Endothelial cell of umbilical vein (primary cell): ENCODE measurements at regions of chr11 and their contacts with region 1.

Region 1: GRCh38 chr11:116276051-116277044 is 496.4 kb downstream of the BUD13 start:
- DNase-seq: peak; percentile 50
- H3K4me3 ChIP-seq: no peak overlapping the region
- H3K27ac ChIP-seq: no peak overlapping the region
- H3K4me1 ChIP-seq: no peaks in the 10 kb centered on the region
- H3K27me3 ChIP-seq: peaks cover 0 to 3% of the 10 kb centered on the region in 2 experiments
- CTCF ChIP-seq: peak; percentile 84 to 95
- POLR2A ChIP-seq: no peak

Region 2: DNA sequence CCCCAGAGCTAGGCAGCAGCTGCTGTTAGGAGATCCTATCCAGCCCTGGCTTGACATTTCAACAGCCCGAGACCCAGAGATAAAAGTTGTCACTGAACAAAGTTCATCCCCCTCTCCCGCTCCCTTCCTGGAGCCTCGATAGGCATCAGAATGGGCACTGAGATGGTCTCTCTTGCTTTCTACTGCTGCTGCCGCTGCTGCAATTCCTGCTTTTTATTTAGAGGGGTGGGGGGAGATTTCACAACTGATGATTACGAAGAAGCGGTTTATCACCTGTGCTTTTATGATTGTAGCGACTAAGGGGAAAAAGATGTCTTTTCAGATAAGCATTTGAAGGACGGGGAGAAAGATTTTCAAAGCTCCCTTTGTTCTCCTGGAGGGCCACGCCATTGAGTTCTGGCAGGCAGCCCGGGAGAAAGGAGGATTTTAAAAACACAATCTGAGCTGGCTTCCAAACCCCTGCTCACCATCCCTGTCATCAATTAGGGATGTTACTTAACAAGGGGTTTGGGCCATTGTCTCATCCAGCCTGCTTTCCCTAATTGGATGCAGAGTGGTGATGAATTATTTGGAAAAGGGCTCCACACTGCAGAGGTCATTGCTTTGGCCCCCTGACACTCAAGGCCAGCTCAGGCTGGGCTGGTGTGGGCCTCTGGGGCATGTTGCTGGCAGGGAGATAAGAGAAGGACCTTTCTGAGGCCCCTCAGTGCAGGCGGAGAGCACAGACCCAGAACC is 151.7 kb after region 1 on chr11:
- CTCF ChIA-PET with region 1: interaction called, 6 read pairs
- POLR2A ChIA-PET with region 1: no interaction called
- dilution Hi-C with region 1: no loop called
- intact Hi-C with region 1: loop called (anchors 10 kb)
- DNase-seq: peak; percentile 7
- H3K4me3 ChIP-seq: no peak overlapping the region
- H3K27ac ChIP-seq: no peak overlapping the region
- H3K4me1 ChIP-seq: no peaks in the 10 kb centered on the region
- H3K27me3 ChIP-seq: no peaks in the 10 kb centered on the region
- CTCF ChIP-seq: no peak
- POLR2A ChIP-seq: no peak